ENCODE measurements at regions of chr15 and their contacts with region 1.

Region 1: GRCh38 chr15:99076552-99077308 is 28.1 kb upstream of the SYNM start:
- DNase-seq: peak; percentile 52
- H3K4me3 Mint-ChIP-seq: peak overlapping the region; percentile 77
- H3K27ac Mint-ChIP-seq: no peak overlapping the region
- H3K4me1 Mint-ChIP-seq: peaks cover 7% of the 10 kb centered on the region
- H3K27me3 Mint-ChIP-seq: peaks cover 14% of the 10 kb centered on the region

Region 2: DNA sequence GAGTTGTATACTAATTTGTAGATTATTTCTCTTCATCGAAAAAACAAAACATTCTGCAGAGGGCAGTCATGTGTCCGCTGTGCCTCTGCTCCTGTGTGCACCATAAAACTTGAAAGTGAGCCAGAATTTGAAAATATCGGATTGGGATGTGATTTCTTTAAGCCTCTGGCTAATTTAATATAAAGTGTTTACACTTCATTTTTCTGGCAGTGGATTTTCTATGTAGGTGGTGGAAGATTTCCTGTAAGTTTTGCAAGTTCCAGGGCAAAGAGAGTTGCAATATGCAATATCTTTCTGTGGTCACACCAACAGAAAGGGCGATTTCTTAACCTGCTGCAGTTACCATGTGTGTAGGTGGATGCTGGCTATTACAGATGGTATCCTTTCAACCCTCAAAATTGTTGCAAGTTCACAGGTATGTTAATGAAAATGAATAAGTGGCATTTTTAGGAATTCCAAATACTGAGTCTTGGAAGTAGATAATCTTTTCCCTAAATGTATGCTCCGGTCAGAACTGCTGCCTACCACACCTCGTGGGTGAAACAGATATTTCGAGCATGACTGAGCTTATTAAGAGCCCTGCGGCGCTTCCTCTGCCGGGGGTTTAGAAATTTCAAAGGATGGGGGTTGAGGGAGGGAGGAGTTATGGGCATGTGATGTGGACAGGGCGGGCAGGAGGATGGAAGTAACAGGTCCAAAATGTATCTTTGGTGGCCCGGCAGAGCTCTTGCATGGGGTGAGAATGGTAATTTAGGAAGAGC is 203.1 kb before region 1 on chr15:
- CTCF ChIA-PET with region 1: no interaction called
- POLR2A ChIA-PET with region 1: no interaction called
- DNase-seq: no peak
- H3K4me3 Mint-ChIP-seq: no peak overlapping the region
- H3K27ac Mint-ChIP-seq: no peak overlapping the region
- H3K4me1 Mint-ChIP-seq: peaks cover 4% of the 10 kb centered on the region
- H3K27me3 Mint-ChIP-seq: peaks cover 8% of the 10 kb centered on the region

Region 3: GRCh38 chr15:99042892-99043291 is 33.8 kb before region 1 on chr15:
- CTCF ChIA-PET with region 1: no interaction called
- POLR2A ChIA-PET with region 1: no interaction called
- DNase-seq: no peak
- H3K4me3 Mint-ChIP-seq: no peak overlapping the region
- H3K27ac Mint-ChIP-seq: no peak overlapping the region
- H3K4me1 Mint-ChIP-seq: no peaks in the 10 kb centered on the region
- H3K27me3 Mint-ChIP-seq: peaks cover 24% of the 10 kb centered on the region

Region 4: DNA sequence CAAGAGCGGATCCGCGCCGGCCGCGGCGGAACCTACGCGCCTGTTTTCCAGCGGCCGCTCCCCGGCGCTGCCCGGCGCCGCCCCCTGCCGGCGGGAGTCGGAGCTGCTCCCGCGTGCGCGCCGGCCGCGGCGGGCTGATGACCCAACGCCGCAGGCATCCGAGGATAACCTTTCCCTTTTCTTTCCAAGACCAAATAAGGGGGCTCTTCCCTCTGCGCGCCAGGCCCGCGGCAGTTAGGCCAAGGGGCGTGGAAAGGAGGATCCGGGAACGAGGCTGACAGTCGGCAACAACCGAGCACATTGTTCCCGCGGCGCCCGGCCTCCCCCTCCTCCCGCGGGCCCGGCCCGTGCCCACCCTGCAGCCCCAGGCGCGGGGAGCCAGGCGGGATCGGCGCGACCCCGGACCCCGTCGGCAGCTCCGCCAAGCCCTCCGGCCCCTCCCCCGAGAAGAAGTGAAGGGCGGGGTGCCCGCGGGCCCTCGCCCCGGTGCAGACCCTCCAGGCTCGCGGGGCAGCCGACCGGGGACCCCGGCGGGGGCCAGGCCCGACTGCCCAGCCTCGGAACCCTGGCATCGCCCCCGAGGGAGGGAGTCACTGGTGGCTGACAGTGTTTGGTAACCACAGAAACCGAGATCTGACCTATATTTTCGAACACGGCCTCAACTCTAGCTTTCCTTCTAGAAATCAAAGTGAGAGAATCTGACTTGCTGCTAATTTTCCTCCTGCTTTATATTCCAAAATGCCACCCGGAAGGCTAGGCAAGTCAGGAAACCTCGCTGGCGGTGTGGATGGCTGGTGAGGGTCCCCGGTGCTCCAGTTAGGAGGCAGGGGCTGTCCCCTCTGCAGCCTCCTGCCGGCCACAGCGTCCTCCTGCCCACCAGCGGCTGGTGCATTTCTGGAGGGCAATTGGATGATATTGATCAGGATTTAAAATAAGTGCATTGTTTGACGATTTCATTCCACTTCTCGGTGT is 17.4 kb before region 1 on chr15:
- CTCF ChIA-PET with region 1: interaction called, 14 read pairs
- POLR2A ChIA-PET with region 1: no interaction called
- DNase-seq: peak; percentile 50
- H3K4me3 Mint-ChIP-seq: peak overlapping the region; percentile 44
- H3K27ac Mint-ChIP-seq: no peak overlapping the region
- H3K4me1 Mint-ChIP-seq: peaks cover 9% of the 10 kb centered on the region
- H3K27me3 Mint-ChIP-seq: peaks cover 34% of the 10 kb centered on the region

Region 5: DNA sequence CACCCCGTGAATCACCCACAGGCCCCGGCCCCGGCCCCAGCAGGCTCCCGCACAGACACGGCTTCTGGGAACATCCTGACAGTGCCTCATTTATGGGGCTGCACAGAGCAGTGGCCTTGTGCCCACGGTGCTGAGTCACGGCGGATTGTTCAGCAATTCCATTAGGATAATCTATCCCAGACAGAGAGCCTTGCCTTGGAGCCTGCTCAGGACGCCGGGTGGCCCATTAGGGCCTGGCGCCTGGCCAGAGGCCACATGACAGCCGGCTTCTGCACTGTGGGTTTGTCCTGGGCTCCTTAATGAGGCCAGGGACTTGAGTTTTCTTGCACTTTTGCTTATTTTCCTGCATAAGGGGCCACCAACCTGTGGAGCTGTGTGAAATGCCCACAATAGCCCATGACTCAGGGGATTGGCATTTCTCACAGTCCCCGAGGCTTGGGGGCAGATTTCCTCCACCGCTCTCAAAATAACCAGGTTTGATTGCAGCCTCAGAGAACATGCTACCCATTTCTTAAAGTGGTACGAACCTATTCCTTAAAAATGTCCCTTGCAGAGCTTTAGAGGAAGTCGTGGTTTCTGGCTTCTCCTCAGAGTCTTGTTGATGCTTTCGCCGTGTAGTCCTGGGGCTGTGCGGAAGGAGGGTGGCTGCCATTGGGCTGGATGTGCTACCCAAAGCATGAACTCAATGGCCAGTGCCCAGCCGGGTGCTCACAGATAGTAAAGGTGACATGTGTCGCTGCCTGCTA is 47.1 kb after region 1 on chr15:
- CTCF ChIA-PET with region 1: no interaction called
- POLR2A ChIA-PET with region 1: no interaction called
- DNase-seq: no peak
- H3K4me3 Mint-ChIP-seq: no peak overlapping the region
- H3K27ac Mint-ChIP-seq: no peak overlapping the region
- H3K4me1 Mint-ChIP-seq: no peaks in the 10 kb centered on the region
- H3K27me3 Mint-ChIP-seq: peaks cover 2% of the 10 kb centered on the region

Measured in activated CD4-positive, alpha-beta memory T cell treated with anti-CD3 and anti-CD28 coated beads, Interleukin-2, amount 10 ng/mL, durations not matched to agents 7 days and 5 days (primary cell).